ENCODE measurements at regions of chr2 and their contacts with region 1.

Region 1: GRCh38 chr2:204545861-204546735 is 823 bp downstream of the PARD3B start:
- DNase-seq: no peak
- H3K4me3 ChIP-seq: peak overlapping the region; percentile 83
- H3K27ac ChIP-seq: no peak overlapping the region
- H3K27me3 ChIP-seq: no peaks in the 10 kb centered on the region
- CTCF ChIP-seq: no peak

Region 2: GRCh38 chr2:204428675-204429074 is 117.4 kb before region 1 on chr2:
- CTCF ChIA-PET with region 1: no interaction called
- POLR2A ChIA-PET with region 1: no interaction called
- DNase-seq: no peak
- H3K4me3 ChIP-seq: no peak overlapping the region
- H3K27ac ChIP-seq: no peak overlapping the region
- H3K27me3 ChIP-seq: no peaks in the 10 kb centered on the region
- CTCF ChIP-seq: no peak

Region 3: DNA sequence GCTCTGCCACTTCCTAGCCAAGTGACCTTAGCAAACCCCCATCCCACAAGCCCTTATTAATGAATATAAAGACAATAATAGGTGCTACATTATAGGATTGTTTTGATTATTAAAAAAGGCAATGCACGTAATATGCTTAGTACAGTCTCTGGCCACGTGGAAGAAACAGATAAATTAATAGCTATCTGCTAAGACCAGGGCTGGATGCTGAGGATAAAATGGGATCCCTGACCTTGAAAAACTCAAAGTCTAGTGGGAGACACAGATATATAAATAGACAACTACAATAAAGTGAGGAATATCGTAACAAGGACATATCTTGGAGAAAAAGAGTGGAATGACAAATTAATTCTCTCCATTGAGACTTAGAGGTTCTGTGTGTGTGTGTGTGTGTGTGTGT is 30.7 kb before region 1 on chr2:
- CTCF ChIA-PET with region 1: no interaction called
- POLR2A ChIA-PET with region 1: no interaction called
- DNase-seq: no peak
- H3K4me3 ChIP-seq: no peak overlapping the region
- H3K27ac ChIP-seq: no peak overlapping the region
- H3K27me3 ChIP-seq: no peaks in the 10 kb centered on the region
- CTCF ChIP-seq: no peak

Region 4: DNA sequence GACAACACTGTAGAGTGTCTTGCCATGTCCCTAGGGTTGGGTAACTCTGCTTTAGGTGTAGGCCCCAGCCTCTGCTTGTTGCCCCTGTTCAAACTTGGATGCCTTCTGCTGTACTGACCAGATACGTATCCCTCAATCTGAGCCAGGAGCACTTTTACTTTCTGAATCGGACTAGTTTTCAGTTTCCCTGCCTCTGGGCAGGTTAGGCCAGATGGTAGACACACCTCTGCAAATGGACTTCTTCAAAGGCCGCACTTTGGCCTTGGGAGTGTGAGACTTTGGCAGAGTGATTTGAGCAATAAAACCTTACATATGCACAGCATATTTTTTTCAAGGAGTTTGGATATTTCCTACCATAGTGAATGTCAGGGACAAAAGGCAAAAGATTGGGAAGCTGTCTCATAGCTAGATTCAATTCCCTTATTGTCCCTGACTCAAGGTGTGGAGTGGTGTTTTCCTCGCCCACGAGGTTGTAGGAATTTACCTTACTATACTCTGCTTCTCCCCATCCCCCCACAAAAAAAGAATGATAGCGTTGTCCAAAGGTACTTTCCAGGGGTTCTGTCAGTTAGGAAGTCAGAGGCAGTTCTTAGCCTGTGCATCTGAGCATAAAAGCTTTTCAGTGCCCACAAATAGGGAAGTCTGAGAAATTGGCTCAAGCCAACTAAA is 16.2 kb before region 1 on chr2:
- CTCF ChIA-PET with region 1: no interaction called
- POLR2A ChIA-PET with region 1: no interaction called
- DNase-seq: no peak
- H3K4me3 ChIP-seq: no peak overlapping the region
- H3K27ac ChIP-seq: no peak overlapping the region
- H3K27me3 ChIP-seq: no peaks in the 10 kb centered on the region
- CTCF ChIP-seq: no peak

Region 5: GRCh38 chr2:204691911-204692510 is 145.9 kb after region 1 on chr2:
- CTCF ChIA-PET with region 1: interaction called, 12 read pairs
- POLR2A ChIA-PET with region 1: interaction called, 3 read pairs
- DNase-seq: peak; percentile 79
- H3K4me3 ChIP-seq: no peak overlapping the region
- H3K27ac ChIP-seq: no peak overlapping the region
- H3K27me3 ChIP-seq: no peaks in the 10 kb centered on the region
- CTCF ChIP-seq: peak; percentile 87

Measured in AG04450 (cell line).